ENCODE measurements at regions of chr13 and their contacts with region 1.

Region 1: DNA sequence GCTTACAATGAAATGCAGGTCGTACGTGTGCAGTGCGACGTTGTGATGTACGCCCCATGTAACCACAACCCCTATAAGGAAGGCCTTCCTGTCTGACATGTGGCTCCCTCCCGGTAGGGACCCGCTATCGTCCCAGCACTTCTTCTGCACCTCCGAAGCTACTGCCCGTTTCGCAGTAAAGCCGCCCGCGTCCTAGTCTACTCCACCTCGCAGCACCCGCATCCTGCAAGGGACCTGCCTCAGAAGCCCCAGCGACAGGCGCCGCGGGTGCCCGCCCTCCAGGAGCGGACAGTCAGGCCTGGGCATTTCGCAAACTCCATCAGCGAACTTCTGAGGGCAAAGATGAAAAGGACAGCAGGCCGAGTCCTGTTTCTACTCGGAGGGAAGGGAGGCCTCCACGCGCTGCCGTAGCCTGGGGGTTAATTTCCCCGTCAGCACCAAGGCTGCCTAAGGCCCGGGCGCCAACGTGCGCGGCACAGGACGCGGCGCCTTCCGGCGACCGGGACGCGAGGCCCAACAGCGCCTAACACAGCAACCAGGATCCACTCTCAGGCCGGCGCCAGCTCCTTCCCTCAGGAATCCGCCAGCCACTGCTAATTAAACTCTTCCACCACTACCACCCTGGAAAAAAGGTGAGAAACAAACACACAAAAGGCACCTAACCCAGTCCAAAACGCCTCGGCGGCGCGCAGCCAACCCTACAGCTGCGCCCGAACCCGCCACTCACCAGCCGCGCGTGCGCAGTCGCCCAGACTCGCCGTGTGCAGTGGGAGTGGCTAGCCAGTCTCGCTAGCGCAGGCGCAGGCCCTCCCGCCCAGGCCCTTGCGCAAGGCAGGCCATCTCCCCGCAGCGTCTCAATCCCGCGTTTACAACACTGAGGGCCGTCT is at the start of gene EEF1AKMT1:
- DNase-seq: peak; percentile 60 to 96
- H3K4me3 ChIP-seq: peak within 1 kb of the TSS; percentile 61 to 80
- H3K27ac ChIP-seq: peak within 1 kb of the TSS; percentile 85 to 87
- H3K4me1 ChIP-seq: peaks cover 0 to 7% of the 10 kb centered on the region in 2 donors
- H3K27me3 ChIP-seq: no peaks in the 10 kb centered on the region
- CTCF ChIP-seq: no peak
- total RNA-seq, gene EEF1AKMT1: not detected

Region 2: GRCh38 chr13:20814224-20814910 is 40.9 kb after region 1 on chr13:
- intact Hi-C with region 1: loop called (anchors 2 kb)
- DNase-seq: peak; percentile 67 to 96
- H3K4me3 ChIP-seq: peak overlapping the region in 1 of 2 donors; percentile 38
- H3K27ac ChIP-seq: peak overlapping the region; percentile 82 to 87
- H3K4me1 ChIP-seq: peaks cover 0 to 24% of the 10 kb centered on the region in 2 donors
- H3K27me3 ChIP-seq: no peaks in the 10 kb centered on the region
- CTCF ChIP-seq: no peak

Region 3: GRCh38 chr13:20828539-20829364 is 55.3 kb after region 1 on chr13:
- intact Hi-C with region 1: loop called (anchors 2 kb)
- DNase-seq: no peak
- H3K4me3 ChIP-seq: peak overlapping the region; percentile 41 to 50
- H3K27ac ChIP-seq: peak overlapping the region in 1 of 2 donors; percentile 6
- H3K4me1 ChIP-seq: peaks cover 4 to 14% of the 10 kb centered on the region in 2 donors
- H3K27me3 ChIP-seq: no peaks in the 10 kb centered on the region
- CTCF ChIP-seq: peak; percentile 70 to 87 (median 73)

Region 4: GRCh38 chr13:20902438-20903163 is 129.2 kb after region 1 on chr13 and contains the start of gene XPO4:
- intact Hi-C with region 1: loop called (anchors 5 kb)
- DNase-seq: peak; percentile 16 to 88
- H3K4me3 ChIP-seq: peak within 1 kb of the TSS; percentile 81 to 88
- H3K27ac ChIP-seq: peak within 1 kb of the TSS; percentile 93
- H3K4me1 ChIP-seq: peaks cover 3 to 10% of the 10 kb centered on the region in 2 donors
- H3K27me3 ChIP-seq: no peaks in the 10 kb centered on the region
- CTCF ChIP-seq: no peak
- total RNA-seq, gene XPO4: 5.1 TPM